Panc1 (cell line): ENCODE measurements at regions of chr17 and their contacts with region 1.

Region 1: GRCh38 chr17:9788597-9788996 is 2.8 kb downstream of the DHRS7C start:
- DNase-seq: no peak
- ATAC-seq: no peak
- H3K4me3 ChIP-seq: no peak overlapping the region
- H3K27ac ChIP-seq: no peak overlapping the region
- H3K4me1 ChIP-seq: no peaks in the 10 kb centered on the region
- H3K27me3 ChIP-seq: no peaks in the 10 kb centered on the region
- CTCF ChIP-seq: no peak

Region 2: GRCh38 chr17:9743096-9743495 is 45.5 kb before region 1 on chr17:
- CTCF ChIA-PET with region 1: interaction called, 10 read pairs
- POLR2A ChIA-PET with region 1: no interaction called
- in situ Hi-C with region 1: no loop called
- intact Hi-C with region 1: no loop called
- DNase-seq: no peak
- ATAC-seq: no peak
- H3K4me3 ChIP-seq: no peak overlapping the region
- H3K27ac ChIP-seq: no peak overlapping the region
- H3K4me1 ChIP-seq: no peaks in the 10 kb centered on the region
- H3K27me3 ChIP-seq: no peaks in the 10 kb centered on the region; the same call in 1 of the 2 replicates
- CTCF ChIP-seq: no peak

Region 3: DNA sequence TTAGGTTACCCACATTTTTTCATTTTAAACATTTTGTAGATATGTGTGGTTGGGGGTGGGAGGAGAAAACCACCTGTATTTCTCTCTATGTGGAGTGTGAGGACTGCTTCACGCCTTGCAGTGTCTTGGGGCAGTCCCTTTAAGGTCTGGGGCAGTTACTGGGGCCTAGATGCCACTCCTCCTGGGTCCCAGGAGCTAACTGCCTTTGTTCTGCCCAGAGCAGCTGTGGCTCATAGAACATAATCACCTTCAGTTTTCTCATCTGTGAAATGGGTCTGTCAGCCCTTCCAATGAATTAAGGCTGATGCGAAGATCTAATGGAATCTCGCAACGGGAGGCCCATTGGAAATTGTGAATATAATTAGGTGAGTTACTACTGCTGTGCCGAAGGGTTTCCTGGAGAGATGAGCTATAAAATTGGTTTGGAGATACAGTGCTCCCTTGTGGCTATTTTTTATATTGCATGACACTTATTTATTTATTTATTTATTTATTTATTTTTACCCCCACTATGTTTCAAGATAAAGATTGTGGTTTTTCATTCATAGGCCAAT is 20.1 kb before region 1 on chr17:
- CTCF ChIA-PET with region 1: no interaction called
- POLR2A ChIA-PET with region 1: no interaction called
- in situ Hi-C with region 1: no loop called
- intact Hi-C with region 1: no loop called
- DNase-seq: peak; percentile 18
- ATAC-seq: no peak
- H3K4me3 ChIP-seq: no peak overlapping the region
- H3K27ac ChIP-seq: no peak overlapping the region
- H3K4me1 ChIP-seq: no peaks in the 10 kb centered on the region
- H3K27me3 ChIP-seq: no peaks in the 10 kb centered on the region
- CTCF ChIP-seq: peak; percentile 56; the same call in 1 of the 2 replicates

Region 4: GRCh38 chr17:10857976-10858375 is 1069.4 kb after region 1 on chr17:
- CTCF ChIA-PET with region 1: no interaction called
- POLR2A ChIA-PET with region 1: no interaction called
- in situ Hi-C with region 1: no loop called
- intact Hi-C with region 1: no loop called
- DNase-seq: no peak
- ATAC-seq: no peak
- H3K4me3 ChIP-seq: no peak overlapping the region
- H3K27ac ChIP-seq: no peak overlapping the region
- H3K4me1 ChIP-seq: no peaks in the 10 kb centered on the region
- H3K27me3 ChIP-seq: no peaks in the 10 kb centered on the region; the same call in 1 of the 2 replicates
- CTCF ChIP-seq: no peak